Stomach (tissue), 19 donors: ENCODE measurements at regions of chr12 and their contacts with region 1.

Region 1: GRCh38 chr12:67943226-67943892 is 45.9 kb upstream of the IFNG-AS1 start:
- DNase-seq: peak; percentile 77 to 89
- H3K4me3 ChIP-seq: no peak overlapping the region
- H3K27ac ChIP-seq: no peak overlapping the region
- H3K4me1 ChIP-seq: peaks cover 4 to 20% (median 12%) of the 10 kb centered on the region in 4 donors
- H3K27me3 ChIP-seq: no peaks in the 10 kb centered on the region
- CTCF ChIP-seq: peak in 5 of 7 experiments; percentile 57 to 79 (median 71)
- EP300 ChIP-seq: no peak
- POLR2A ChIP-seq: no peak

Region 2: GRCh38 chr12:67355578-67356379 is 587.6 kb before region 1 on chr12:
- intact Hi-C with region 1: loop called (anchors 2 kb)
- DNase-seq: peak in 1 of 2 donors; percentile 84
- H3K4me3 ChIP-seq: no peak overlapping the region
- H3K27ac ChIP-seq: no peak overlapping the region
- H3K4me1 ChIP-seq: peaks cover 0 to 32% (median 8%) of the 10 kb centered on the region in 4 donors
- H3K27me3 ChIP-seq: no peaks in the 10 kb centered on the region
- CTCF ChIP-seq: peak in 5 of 7 experiments; percentile 16 to 61 (median 34)
- EP300 ChIP-seq: no peak
- POLR2A ChIP-seq: no peak

Region 3: DNA sequence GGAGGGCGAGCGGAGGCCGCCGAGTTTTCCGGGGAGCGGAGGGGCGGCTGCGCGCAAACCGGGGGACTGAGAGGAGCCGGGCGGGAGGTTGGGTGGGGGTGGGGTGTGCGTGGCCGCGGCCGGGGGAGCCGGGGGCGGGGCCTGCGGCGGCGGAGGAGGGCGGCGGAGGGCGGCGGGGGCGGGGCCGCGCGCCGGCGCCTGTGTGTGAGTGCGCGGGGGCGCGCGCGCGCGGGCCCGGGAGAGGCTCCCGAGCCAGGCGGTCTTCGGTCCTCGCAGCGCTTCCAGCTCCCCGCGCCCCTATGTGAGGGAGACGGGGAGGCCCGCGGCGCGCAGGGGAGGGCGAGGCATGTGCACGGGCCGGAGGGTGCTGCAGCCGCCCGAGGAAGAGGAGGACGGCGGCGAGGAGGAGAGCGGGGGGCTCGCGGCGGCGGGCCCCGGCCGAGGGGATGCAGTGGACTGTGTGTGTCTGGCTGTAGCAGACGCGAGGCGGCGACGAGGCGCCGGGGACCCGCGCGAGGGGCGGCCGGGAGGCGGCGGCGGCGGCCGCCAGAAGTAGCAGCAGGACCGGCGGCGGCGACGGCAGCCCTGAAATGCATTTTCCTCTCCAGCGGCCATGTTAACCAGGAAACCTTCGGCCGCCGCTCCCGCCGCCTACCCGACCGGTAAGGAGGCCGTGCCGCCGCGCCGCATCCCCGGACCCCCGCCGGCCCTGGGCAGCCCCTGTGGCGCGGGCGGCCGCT is 294.7 kb before region 1 on chr12 and contains the start of gene DYRK2:
- intact Hi-C with region 1: loop called (anchors 10 kb)
- DNase-seq: peak; percentile 82 to 96
- H3K4me3 ChIP-seq: peak within 1 kb of the TSS; percentile 73 to 98 (median 98)
- H3K27ac ChIP-seq: peak within 1 kb of the TSS; percentile 91 to 99 (median 98)
- H3K4me1 ChIP-seq: peaks cover 21 to 49% (median 35%) of the 10 kb centered on the region in 4 donors
- H3K27me3 ChIP-seq: no peaks in the 10 kb centered on the region
- CTCF ChIP-seq: no peak
- EP300 ChIP-seq: no peak
- POLR2A ChIP-seq: peak in 1 of 4 donors; percentile 41
- total RNA-seq, gene DYRK2: 13.4 to 43.9 (median 27.1) TPM